ENCODE measurements at regions of chr3 and their contacts with region 1.

Region 1: GRCh38 chr3:189967254-189967865 is 153.3 kb downstream of the P3H2 start:
- DNase-seq: peak; percentile 31
- ATAC-seq: no peak
- H3K4me3 Mint-ChIP-seq: no peak overlapping the region
- H3K27ac Mint-ChIP-seq: no peak overlapping the region
- H3K4me1 Mint-ChIP-seq: no peaks in the 10 kb centered on the region
- H3K27me3 Mint-ChIP-seq: peaks cover 3% of the 10 kb centered on the region

Region 2: GRCh38 chr3:190205739-190206138 is 238.4 kb after region 1 on chr3:
- CTCF ChIA-PET with region 1: interaction called, 27 read pairs
- POLR2A ChIA-PET with region 1: no interaction called
- DNase-seq: no peak
- ATAC-seq: no peak
- H3K4me3 Mint-ChIP-seq: no peak overlapping the region
- H3K27ac Mint-ChIP-seq: no peak overlapping the region
- H3K4me1 Mint-ChIP-seq: no peaks in the 10 kb centered on the region
- H3K27me3 Mint-ChIP-seq: peaks cover 9% of the 10 kb centered on the region